ENCODE measurements at regions of chr11 and their contacts with region 1.

Region 1: GRCh38 chr11:1757861-1758610 is 5.7 kb downstream of the CTSD start:
- DNase-seq: no peak
- ATAC-seq: no peak
- H3K4me3 ChIP-seq: peak overlapping the region in 1 of 10 donors; percentile 37
- H3K27ac ChIP-seq: peak overlapping the region in 9 of 10 donors; percentile 17 to 99 (median 97)
- H3K4me1 ChIP-seq: peaks cover 38 to 90% (median 82%) of the 10 kb centered on the region in 9 donors
- H3K27me3 ChIP-seq: no peaks in the 10 kb centered on the region
- CTCF ChIP-seq: no peak

Region 2: GRCh38 chr11:1706634-1707400 is 51.2 kb before region 1 on chr11:
- intact Hi-C with region 1: loop called in 3 of 10 experiments (anchors 5 to 10 kb)
- DNase-seq: no peak
- ATAC-seq: peak in 7 of 8 donors; percentile 42 to 85 (median 66)
- H3K4me3 ChIP-seq: no peak overlapping the region
- H3K27ac ChIP-seq: no peak overlapping the region
- H3K4me1 ChIP-seq: no peaks in the 10 kb centered on the region
- H3K27me3 ChIP-seq: peaks cover 0 to 15% (median 0%) of the 10 kb centered on the region in 7 donors
- CTCF ChIP-seq: peak in 7 of 9 donors; percentile 28 to 54 (median 42)

Region 3: GRCh38 chr11:1959786-1960185 is 201.8 kb after region 1 on chr11:
- intact Hi-C with region 1: no loop called
- DNase-seq: peak in 1 of 2 donors; percentile 2
- ATAC-seq: no peak
- H3K4me3 ChIP-seq: no peak overlapping the region
- H3K27ac ChIP-seq: no peak overlapping the region
- H3K4me1 ChIP-seq: no peaks in the 10 kb centered on the region
- H3K27me3 ChIP-seq: no peaks in the 10 kb centered on the region
- CTCF ChIP-seq: no peak

Region 4: GRCh38 chr11:2208691-2209369 is 450.8 kb after region 1 on chr11:
- intact Hi-C with region 1: no loop called
- DNase-seq: peak in 1 of 2 donors; percentile 2
- ATAC-seq: peak in 3 of 8 donors; percentile 18 to 33 (median 19)
- H3K4me3 ChIP-seq: no peak overlapping the region
- H3K27ac ChIP-seq: no peak overlapping the region
- H3K4me1 ChIP-seq: peaks cover 0 to 4% (median 0%) of the 10 kb centered on the region in 9 donors
- H3K27me3 ChIP-seq: peaks cover 0 to 15% (median 3%) of the 10 kb centered on the region in 7 donors
- CTCF ChIP-seq: no peak

Region 5: GRCh38 chr11:2298795-2299761 is 541.0 kb after region 1 on chr11:
- intact Hi-C with region 1: loop called in 1 of 10 experiments (anchors 5 kb)
- DNase-seq: no peak
- ATAC-seq: no peak
- H3K4me3 ChIP-seq: no peak overlapping the region
- H3K27ac ChIP-seq: peak overlapping the region in 3 of 10 donors; percentile 25 to 40 (median 31)
- H3K4me1 ChIP-seq: peaks cover 0 to 56% (median 14%) of the 10 kb centered on the region in 9 donors
- H3K27me3 ChIP-seq: no peaks in the 10 kb centered on the region
- CTCF ChIP-seq: peak in 7 of 9 donors; percentile 28 to 51 (median 38)